ENCODE measurements at regions of chr4 and their contacts with region 1.

Region 1: GRCh38 chr4:2536193-2537010 is at the start of gene FAM193A:
- DNase-seq: peak; percentile 93 to 99 (median 99)
- ATAC-seq: peak; percentile 96
- H3K4me3 ChIP-seq: peak within 1 kb of the TSS; percentile 58
- H3K4me3 Mint-ChIP-seq: peak within 1 kb of the TSS; percentile 87 to 95 (median 92)
- H3K27ac ChIP-seq: peak within 1 kb of the TSS; percentile 92
- H3K27ac Mint-ChIP-seq: peak within 1 kb of the TSS; percentile 86 to 98 (median 92)
- H3K4me1 ChIP-seq: peaks cover 11 to 15% of the 10 kb centered on the region in 2 donors
- H3K4me1 Mint-ChIP-seq: peaks cover 5 to 36% (median 19%) of the 10 kb centered on the region in 7 donors
- H3K27me3 ChIP-seq: no peaks in the 10 kb centered on the region
- H3K27me3 Mint-ChIP-seq: no peaks in the 10 kb centered on the region
- total RNA-seq, gene FAM193A: 32.8 to 47.2 (median 44.1) TPM

Region 2: DNA sequence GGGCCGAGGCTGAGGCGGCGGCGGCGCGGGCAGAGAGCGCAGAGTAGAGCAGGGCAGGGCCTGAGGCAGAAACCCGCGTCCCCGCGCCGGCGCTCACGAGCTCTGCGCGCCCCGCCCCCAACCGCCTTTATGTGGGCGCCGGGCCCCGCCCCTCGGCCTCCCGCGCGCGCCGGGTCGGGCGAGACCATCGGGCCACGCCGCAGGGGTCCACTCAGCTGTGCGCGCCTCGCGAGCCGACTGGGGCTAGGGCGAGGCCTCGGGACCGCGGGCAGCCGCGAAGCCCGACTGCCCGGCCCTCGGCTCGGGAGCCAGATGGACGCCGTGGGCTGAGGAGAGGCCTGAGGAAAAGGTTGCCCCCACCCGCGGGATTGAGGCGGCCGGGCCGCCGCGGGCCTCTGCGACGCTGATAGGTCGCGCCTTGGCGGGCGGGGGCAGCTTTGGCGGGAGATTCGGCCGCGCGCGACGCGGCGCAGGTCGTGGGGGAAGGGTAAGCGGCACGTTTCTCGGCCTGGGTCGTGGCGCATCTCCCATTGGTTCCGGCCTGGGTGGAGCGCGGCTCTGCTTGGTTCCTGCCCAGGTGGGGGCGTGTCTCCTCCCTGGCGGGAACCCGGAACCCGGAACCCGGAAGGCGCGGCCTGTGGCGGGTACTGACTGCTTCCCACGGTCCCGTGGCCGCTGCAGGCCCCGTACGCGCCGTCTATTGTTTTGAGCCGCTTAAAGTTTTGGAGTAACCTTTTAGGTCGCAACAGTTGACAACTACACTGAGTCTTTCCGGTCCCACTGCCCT is 824.0 kb before region 1 on chr4 and contains the start of gene SLBP:
- CTCF ChIA-PET with region 1: no interaction called
- POLR2A ChIA-PET with region 1: no interaction called
- intact Hi-C with region 1: loop called (anchors 2 to 5 kb)
- DNase-seq: peak; percentile 98 to 99 (median 98)
- ATAC-seq: peak; percentile 92
- H3K4me3 ChIP-seq: peak within 1 kb of the TSS; percentile 100
- H3K4me3 Mint-ChIP-seq: peak within 1 kb of the TSS; percentile 89 to 98 (median 94)
- H3K27ac ChIP-seq: peak within 1 kb of the TSS; percentile 99
- H3K27ac Mint-ChIP-seq: peak within 1 kb of the TSS; percentile 90 to 98 (median 94)
- H3K4me1 ChIP-seq: peaks cover 32 to 34% of the 10 kb centered on the region in 2 donors
- H3K4me1 Mint-ChIP-seq: peaks cover 11 to 67% (median 59%) of the 10 kb centered on the region in 7 donors
- H3K27me3 ChIP-seq: no peaks in the 10 kb centered on the region
- H3K27me3 Mint-ChIP-seq: no peaks in the 10 kb centered on the region
- total RNA-seq, gene SLBP: 29.5 to 103 (median 30.3) TPM

Region 3: GRCh38 chr4:2172161-2172560 is 364.2 kb before region 1 on chr4:
- CTCF ChIA-PET with region 1: no interaction called
- POLR2A ChIA-PET with region 1: no interaction called
- intact Hi-C with region 1: loop called in 1 of 2 experiments (anchors 1 kb)
- DNase-seq: peak in 1 of 9 donors; percentile 30
- ATAC-seq: no peak
- H3K4me3 ChIP-seq: no peak overlapping the region
- H3K4me3 Mint-ChIP-seq: peak overlapping the region in 7 of 10 donors; percentile 13 to 76 (median 64)
- H3K27ac ChIP-seq: no peak overlapping the region
- H3K27ac Mint-ChIP-seq: peak overlapping the region in 5 of 9 donors; percentile 1 to 93 (median 61)
- H3K4me1 ChIP-seq: peaks cover 0 to 8% of the 10 kb centered on the region in 2 donors
- H3K4me1 Mint-ChIP-seq: peaks cover 8 to 86% (median 25%) of the 10 kb centered on the region in 7 donors
- H3K27me3 ChIP-seq: no peaks in the 10 kb centered on the region
- H3K27me3 Mint-ChIP-seq: no peaks in the 10 kb centered on the region

Region 4: GRCh38 chr4:2262143-2262943 is 274.1 kb before region 1 on chr4:
- CTCF ChIA-PET with region 1: no interaction called
- POLR2A ChIA-PET with region 1: no interaction called
- intact Hi-C with region 1: loop called (anchors 1 kb)
- DNase-seq: peak; percentile 95 to 99 (median 98)
- ATAC-seq: peak; percentile 93
- H3K4me3 ChIP-seq: peak overlapping the region; percentile 69
- H3K4me3 Mint-ChIP-seq: peak overlapping the region; percentile 61 to 85 (median 76)
- H3K27ac ChIP-seq: peak overlapping the region; percentile 95
- H3K27ac Mint-ChIP-seq: peak overlapping the region; percentile 61 to 87 (median 83)
- H3K4me1 ChIP-seq: peaks cover 8 to 23% of the 10 kb centered on the region in 2 donors
- H3K4me1 Mint-ChIP-seq: peaks cover 0 to 11% (median 0%) of the 10 kb centered on the region in 7 donors
- H3K27me3 ChIP-seq: no peaks in the 10 kb centered on the region
- H3K27me3 Mint-ChIP-seq: no peaks in the 10 kb centered on the region

Region 5: DNA sequence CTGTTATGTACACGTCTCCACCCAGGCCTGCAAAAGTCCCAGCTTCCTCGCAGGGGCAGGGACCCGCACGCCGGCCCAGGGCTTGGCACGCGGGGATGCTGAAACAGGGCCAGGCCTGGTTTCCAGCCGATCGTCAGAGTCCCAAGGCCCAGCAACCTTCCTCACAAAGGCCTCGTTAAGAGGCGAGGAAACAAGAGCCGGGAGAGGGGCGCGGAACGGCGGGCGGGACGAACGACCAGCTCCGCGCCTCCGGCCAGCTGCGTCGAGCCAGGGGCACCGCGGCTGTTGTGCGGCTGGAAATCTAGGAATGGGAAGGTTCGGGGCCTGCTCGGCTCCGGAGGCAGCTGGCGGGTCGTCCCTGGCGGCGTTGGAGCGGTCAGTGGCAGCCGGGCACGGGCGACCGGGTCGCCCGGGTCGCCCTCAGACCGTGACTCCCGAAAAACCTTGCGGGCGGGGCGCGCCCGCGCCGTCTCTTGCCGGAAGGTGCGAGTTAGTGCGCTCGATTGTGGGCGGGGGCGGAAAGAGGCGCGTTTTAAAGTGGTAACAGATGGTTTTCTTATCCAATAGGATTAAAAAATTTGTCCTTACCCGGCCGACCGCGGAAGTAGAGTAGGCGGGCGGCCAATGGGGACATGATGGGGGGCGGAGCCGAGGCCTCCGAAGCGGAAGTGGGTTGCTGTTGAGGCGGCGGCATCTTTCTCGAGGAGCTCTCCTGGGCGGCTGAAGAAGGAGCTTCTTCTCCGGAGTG is 67.8 kb before region 1 on chr4 and contains the start of gene RNF4:
- CTCF ChIA-PET with region 1: no interaction called
- POLR2A ChIA-PET with region 1: interaction called, 21 read pairs
- intact Hi-C with region 1: loop called (anchors 1 kb)
- DNase-seq: peak; percentile 77 to 97 (median 96)
- ATAC-seq: peak; percentile 93
- H3K4me3 ChIP-seq: peak within 1 kb of the TSS; percentile 70
- H3K4me3 Mint-ChIP-seq: peak within 1 kb of the TSS; percentile 90 to 98 (median 95)
- H3K27ac ChIP-seq: peak within 1 kb of the TSS; percentile 94
- H3K27ac Mint-ChIP-seq: peak within 1 kb of the TSS; percentile 95 to 98 (median 98)
- H3K4me1 ChIP-seq: peaks cover 31 to 37% of the 10 kb centered on the region in 2 donors
- H3K4me1 Mint-ChIP-seq: peaks cover 40 to 66% (median 53%) of the 10 kb centered on the region in 7 donors
- H3K27me3 ChIP-seq: no peaks in the 10 kb centered on the region
- H3K27me3 Mint-ChIP-seq: peaks cover 0 to 6% (median 0%) of the 10 kb centered on the region in 5 donors
- total RNA-seq, gene RNF4: 80.7 to 101 (median 91.8) TPM

Region 6: DNA sequence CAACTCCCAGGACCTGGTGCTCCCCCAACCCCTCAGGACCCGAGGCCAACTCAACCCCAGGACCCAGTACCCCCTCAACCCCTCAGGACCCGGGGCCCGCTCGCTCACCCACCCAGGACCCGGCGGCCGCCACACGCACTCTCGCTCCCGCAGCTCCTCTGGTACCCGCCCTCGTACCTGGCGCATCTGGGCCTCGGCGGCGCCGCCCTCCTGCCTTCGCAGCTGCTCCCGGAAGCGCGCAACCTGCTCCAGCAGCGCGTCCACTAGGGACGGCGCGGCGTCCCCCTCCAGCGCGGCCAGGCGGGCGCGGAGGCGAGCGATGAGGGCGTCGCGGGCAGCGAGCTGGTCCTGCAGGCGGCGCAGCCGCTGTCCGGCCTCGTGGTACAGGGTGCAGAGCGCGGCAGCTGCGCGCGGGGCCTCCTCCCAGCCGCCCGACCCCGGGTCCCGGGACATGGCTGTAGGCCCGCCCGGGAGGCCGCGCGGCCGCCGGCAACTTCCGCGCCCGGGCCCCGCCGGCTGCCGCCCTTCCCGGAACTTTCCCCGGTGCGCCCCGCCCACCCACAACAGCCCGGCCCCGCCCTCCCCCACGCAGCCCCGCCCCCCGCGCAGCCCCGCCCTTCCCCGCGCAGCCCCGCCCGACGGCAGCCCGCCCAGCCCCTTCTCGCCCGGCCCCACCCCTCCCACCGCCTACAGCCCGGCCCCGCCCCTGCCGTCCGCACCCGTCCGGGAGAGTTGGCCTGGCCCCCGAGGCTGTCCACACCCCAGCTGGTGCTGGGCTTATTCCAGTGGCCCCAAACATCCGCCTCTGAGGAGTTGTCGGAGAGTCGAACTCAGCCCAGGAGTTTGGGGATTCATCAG is 219.7 kb after region 1 on chr4 and contains the start of gene TNIP2:
- CTCF ChIA-PET with region 1: no interaction called
- POLR2A ChIA-PET with region 1: no interaction called
- intact Hi-C with region 1: loop called (anchors 1 kb)
- DNase-seq: peak; percentile 65 to 85 (median 74)
- ATAC-seq: peak; percentile 90
- H3K4me3 ChIP-seq: peak within 1 kb of the TSS; percentile 64
- H3K4me3 Mint-ChIP-seq: peak within 1 kb of the TSS; percentile 75 to 93 (median 87)
- H3K27ac ChIP-seq: peak within 1 kb of the TSS; percentile 91
- H3K27ac Mint-ChIP-seq: peak within 1 kb of the TSS; percentile 54 to 94 (median 86)
- H3K4me1 ChIP-seq: peaks cover 9 to 12% of the 10 kb centered on the region in 2 donors
- H3K4me1 Mint-ChIP-seq: peaks cover 22 to 29% (median 26%) of the 10 kb centered on the region in 7 donors
- H3K27me3 ChIP-seq: no peaks in the 10 kb centered on the region
- H3K27me3 Mint-ChIP-seq: no peaks in the 10 kb centered on the region
- total RNA-seq, gene TNIP2: 39.4 to 56.0 (median 43.6) TPM